ENCODE measurements at regions of chr13 and their contacts with region 1.

Region 1: GRCh38 chr13:30465585-30466357 is at the start of gene HMGB1:
- DNase-seq: peak; percentile 97
- ATAC-seq: peak; percentile 93
- H3K4me3 ChIP-seq: peak within 1 kb of the TSS; percentile 82
- H3K27ac ChIP-seq: peak within 1 kb of the TSS; percentile 97
- H3K4me1 ChIP-seq: 0 out of 2 replicates have a peak, but pooled peaks cover 10% of the 10 kb centered on the region
- H3K27me3 ChIP-seq: no peaks in the 10 kb centered on the region
- CTCF ChIP-seq: no peak
- EP300 ChIP-seq: no peak
- POLR2A ChIP-seq: peak; percentile 96
- RAD21 ChIP-seq: no peak
- polyA plus RNA-seq, gene HMGB1: 2,416 to 2,529 TPM

Region 2: DNA sequence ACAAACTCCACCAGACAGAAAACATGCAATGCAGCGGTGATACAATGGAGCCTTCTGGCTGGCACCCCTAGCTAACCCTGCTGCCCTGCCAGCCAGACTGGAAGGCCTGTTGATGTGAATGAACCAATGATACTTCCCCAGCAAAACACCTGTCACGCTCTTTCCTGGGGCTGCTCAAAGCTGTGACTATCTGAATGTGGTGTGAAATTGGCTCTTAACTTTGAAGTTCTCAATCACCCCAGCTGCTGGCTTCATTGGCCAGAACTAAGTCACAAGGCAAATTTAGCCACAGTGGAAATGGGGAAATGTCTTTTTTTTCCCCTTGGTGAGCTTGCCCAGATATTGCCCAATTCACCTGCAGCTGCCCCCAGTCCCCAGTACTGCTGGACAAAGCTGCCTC is 1017.6 kb before region 1 on chr13:
- CTCF ChIA-PET with region 1: no interaction called
- POLR2A ChIA-PET with region 1: no interaction called
- RAD21 ChIA-PET with region 1: no interaction called
- SMC1A ChIA-PET with region 1: no interaction called
- in situ Hi-C with region 1: no loop called
- intact Hi-C with region 1: no loop called
- DNase-seq: no peak
- ATAC-seq: no peak
- H3K4me3 ChIP-seq: no peak overlapping the region
- H3K27ac ChIP-seq: no peak overlapping the region
- H3K4me1 ChIP-seq: no peaks in the 10 kb centered on the region
- H3K27me3 ChIP-seq: no peaks in the 10 kb centered on the region; a peak in 1 of 4 replicates
- CTCF ChIP-seq: no peak
- EP300 ChIP-seq: no peak
- POLR2A ChIP-seq: no peak
- RAD21 ChIP-seq: no peak

Region 3: DNA sequence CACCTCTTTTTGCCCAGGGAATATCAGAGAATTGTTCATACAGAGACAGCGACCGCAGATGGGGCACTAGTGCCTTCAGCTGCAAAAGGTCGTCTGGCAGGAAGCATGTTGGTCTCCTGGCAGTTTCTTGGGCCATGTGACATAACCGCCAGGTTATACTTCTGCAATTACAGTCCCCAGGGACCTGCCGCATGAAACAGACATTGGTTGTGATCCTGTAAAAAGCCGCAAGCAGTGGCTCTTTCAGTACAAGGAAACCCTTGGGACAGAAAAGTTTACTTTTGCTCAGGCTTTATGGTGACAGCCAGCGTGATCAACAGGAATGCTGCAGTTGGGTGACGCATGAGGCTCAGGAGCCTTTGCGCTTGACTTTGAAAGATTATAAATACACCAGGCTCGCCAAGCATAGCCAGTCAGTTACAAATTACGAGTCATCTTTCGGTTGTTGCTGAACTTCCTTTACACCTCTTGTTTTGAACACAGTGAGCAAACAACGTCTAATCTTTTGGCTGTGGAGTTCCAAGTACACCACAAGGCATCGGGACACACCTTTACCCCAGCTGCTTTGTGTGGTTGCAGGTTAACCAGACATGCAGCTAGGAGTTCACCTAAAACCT is 94.0 kb before region 1 on chr13:
- CTCF ChIA-PET with region 1: interaction called, 9 read pairs
- POLR2A ChIA-PET with region 1: interaction called, 12 read pairs
- RAD21 ChIA-PET with region 1: interaction called, 19 read pairs
- SMC1A ChIA-PET with region 1: interaction called, 13 read pairs
- in situ Hi-C with region 1: no loop called
- intact Hi-C with region 1: loop called (anchors 5 kb)
- DNase-seq: peak; percentile 96
- ATAC-seq: peak; percentile 74
- H3K4me3 ChIP-seq: peak overlapping the region; percentile 12; the same call in 1 of the 2 replicates
- H3K27ac ChIP-seq: peak overlapping the region; percentile 73
- H3K4me1 ChIP-seq: peaks cover 62% of the 10 kb centered on the region
- H3K27me3 ChIP-seq: no peaks in the 10 kb centered on the region
- CTCF ChIP-seq: peak in 1 of 3 experiments; percentile 6; a peak in 1 of 6 replicates
- EP300 ChIP-seq: peak; percentile 96 to 97
- POLR2A ChIP-seq: no peak
- RAD21 ChIP-seq: 0 out of 2 replicates have a peak, but pooled peaks have one; percentile 1

Region 4: DNA sequence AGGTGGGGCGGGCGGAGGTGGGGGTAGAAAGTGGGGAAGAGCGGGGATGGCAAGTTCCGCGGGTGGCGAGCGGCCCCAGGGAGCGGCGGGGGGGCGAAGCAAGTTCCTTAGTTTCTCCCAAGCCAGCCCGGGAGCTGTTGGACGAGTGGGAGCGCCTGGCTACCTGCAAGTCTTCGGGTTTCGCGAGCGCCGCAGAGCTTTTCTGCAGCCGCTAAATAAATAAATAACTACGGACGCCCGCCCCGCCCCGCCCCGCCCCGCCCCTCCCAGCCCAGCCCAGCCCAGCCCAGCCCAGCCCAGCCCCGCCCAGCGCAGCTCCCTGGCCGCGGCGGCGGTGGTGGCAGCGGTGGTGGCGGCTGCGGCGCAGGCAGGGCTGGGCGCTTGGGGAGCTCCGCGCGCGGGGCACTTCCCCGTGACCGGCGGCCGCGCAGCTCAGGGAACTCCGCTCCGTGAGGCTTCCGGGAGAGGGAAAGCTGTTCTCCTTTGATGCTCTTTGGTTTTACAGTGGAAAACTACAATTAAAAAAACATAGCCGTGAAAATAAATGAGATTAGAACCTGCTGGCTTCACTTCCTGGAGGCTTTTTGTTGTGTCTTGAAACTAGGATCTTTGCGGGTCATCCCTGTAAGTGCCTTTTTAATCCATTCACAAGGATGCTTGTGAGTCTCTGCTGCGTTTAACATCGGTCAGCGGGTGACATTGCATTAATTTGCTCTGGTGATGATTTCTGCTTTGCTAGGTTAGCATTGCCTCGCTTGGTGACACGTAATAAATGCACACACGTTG is 43.5 kb before region 1 on chr13 and contains the start of gene UBE2L5:
- CTCF ChIA-PET with region 1: interaction called, 8 read pairs
- POLR2A ChIA-PET with region 1: interaction called, 3 read pairs
- RAD21 ChIA-PET with region 1: interaction called, 8 read pairs
- SMC1A ChIA-PET with region 1: interaction called, 4 read pairs
- in situ Hi-C with region 1: no loop called
- intact Hi-C with region 1: loop called (anchors 2 kb)
- DNase-seq: no peak
- ATAC-seq: peak; percentile 95
- H3K4me3 ChIP-seq: peak within 1 kb of the TSS; percentile 82
- H3K27ac ChIP-seq: peak within 1 kb of the TSS; percentile 50
- H3K4me1 ChIP-seq: peaks cover 2% of the 10 kb centered on the region; the same call in 1 of the 2 replicates
- H3K27me3 ChIP-seq: no peaks in the 10 kb centered on the region
- CTCF ChIP-seq: no peak
- EP300 ChIP-seq: no peak
- POLR2A ChIP-seq: peak; percentile 75
- RAD21 ChIP-seq: no peak
- polyA plus RNA-seq, gene UBE2L5: 0.03 to 0.11 TPM

Region 5: GRCh38 chr13:30443957-30444404 is 21.8 kb before region 1 on chr13:
- CTCF ChIA-PET with region 1: interaction called, 11 read pairs
- POLR2A ChIA-PET with region 1: interaction called, 12 read pairs
- RAD21 ChIA-PET with region 1: interaction called, 12 read pairs
- SMC1A ChIA-PET with region 1: interaction called, 10 read pairs
- in situ Hi-C with region 1: no loop called
- intact Hi-C with region 1: loop called (anchors 2 kb)
- DNase-seq: no peak
- ATAC-seq: peak; percentile 62
- H3K4me3 ChIP-seq: peak overlapping the region; percentile 26; the same call in 1 of the 2 replicates
- H3K27ac ChIP-seq: peak overlapping the region; percentile 56
- H3K4me1 ChIP-seq: peaks cover 43% of the 10 kb centered on the region
- H3K27me3 ChIP-seq: no peaks in the 10 kb centered on the region
- CTCF ChIP-seq: no peak
- EP300 ChIP-seq: 0 out of 4 replicates have a peak, but pooled peaks of 1 of the 2 experiments have one; percentile 5
- POLR2A ChIP-seq: no peak
- RAD21 ChIP-seq: 0 out of 2 replicates have a peak, but pooled peaks have one; percentile 4

Region 6: GRCh38 chr13:30572859-30573275 is 107.1 kb after region 1 on chr13:
- CTCF ChIA-PET with region 1: interaction called, 4 read pairs
- POLR2A ChIA-PET with region 1: no interaction called
- RAD21 ChIA-PET with region 1: no interaction called
- SMC1A ChIA-PET with region 1: no interaction called
- in situ Hi-C with region 1: no loop called
- intact Hi-C with region 1: loop called (anchors 1 kb)
- DNase-seq: peak; percentile 28
- ATAC-seq: peak; percentile 81
- H3K4me3 ChIP-seq: no peak overlapping the region; the same call in 1 of the 2 replicates
- H3K27ac ChIP-seq: no peak overlapping the region
- H3K4me1 ChIP-seq: peaks cover 17% of the 10 kb centered on the region; the same call in 1 of the 2 replicates
- H3K27me3 ChIP-seq: peaks cover 0 to under 1% of the 10 kb centered on the region in 2 experiments; a peak in 1 of 4 replicates
- CTCF ChIP-seq: peak; percentile 5 to 35 (median 31); a peak in 3 of 6 replicates
- EP300 ChIP-seq: no peak
- POLR2A ChIP-seq: no peak
- RAD21 ChIP-seq: peak; percentile 68

Region 7: DNA sequence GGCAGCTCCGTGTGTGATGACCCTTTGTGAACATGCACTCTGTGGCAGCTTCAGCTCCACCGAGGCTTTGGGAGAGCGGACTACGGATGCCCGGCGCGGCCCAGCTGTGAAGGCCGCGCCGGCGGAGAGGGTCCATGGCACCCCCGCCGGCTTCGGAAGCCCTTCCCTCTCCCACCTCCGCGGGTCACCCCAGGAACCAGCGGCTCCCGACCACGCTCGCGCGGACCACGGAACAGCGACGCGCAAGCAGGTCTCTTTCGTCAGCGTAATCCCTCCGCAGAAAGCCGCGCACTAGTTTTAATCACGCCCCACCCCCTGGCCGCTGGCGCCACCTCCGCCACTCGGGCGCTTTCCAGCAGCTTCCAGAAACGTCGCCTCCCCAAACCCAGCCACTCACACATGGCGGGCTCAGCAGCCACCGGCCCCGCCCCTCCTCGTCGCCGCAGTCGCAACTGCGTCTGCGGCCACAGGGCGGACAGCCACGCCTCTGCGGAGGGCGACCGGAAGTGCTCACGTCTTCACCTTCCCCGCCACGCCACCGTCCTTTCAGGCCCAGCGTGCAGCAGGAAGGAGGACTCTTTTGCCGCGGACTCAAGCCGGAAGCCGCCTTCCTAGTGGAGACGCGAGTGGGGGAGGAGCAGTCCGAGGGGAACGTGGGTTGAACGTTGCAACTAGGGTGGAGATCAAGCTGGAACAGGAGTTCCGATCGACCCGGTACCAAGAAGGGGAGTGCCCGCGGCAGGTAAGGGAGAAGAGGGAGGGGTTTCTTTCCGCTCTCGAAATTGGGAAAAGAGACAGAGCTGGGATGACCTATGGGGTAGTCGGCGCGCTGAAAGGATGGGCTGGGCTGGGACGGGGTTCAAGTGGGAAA is 151.8 kb after region 1 on chr13 and contains the start of gene USPL1:
- CTCF ChIA-PET with region 1: no interaction called
- POLR2A ChIA-PET with region 1: interaction called, 4 read pairs
- RAD21 ChIA-PET with region 1: interaction called, 6 read pairs
- SMC1A ChIA-PET with region 1: interaction called, 4 read pairs
- in situ Hi-C with region 1: no loop called
- intact Hi-C with region 1: loop called (anchors 2 kb)
- DNase-seq: peak; percentile 96
- ATAC-seq: peak; percentile 91
- H3K4me3 ChIP-seq: peak within 1 kb of the TSS; percentile 91
- H3K27ac ChIP-seq: peak within 1 kb of the TSS; percentile 93
- H3K4me1 ChIP-seq: peaks cover 8% of the 10 kb centered on the region
- H3K27me3 ChIP-seq: no peaks in the 10 kb centered on the region
- CTCF ChIP-seq: peak in 1 of 3 experiments; percentile 6; a peak in 1 of 6 replicates
- EP300 ChIP-seq: peak; percentile 84 to 95
- POLR2A ChIP-seq: peak; percentile 93
- RAD21 ChIP-seq: peak; percentile 17; the same call in 1 of the 2 replicates
- polyA plus RNA-seq, gene USPL1: 7.9 to 8.0 TPM

Region 8: GRCh38 chr13:30802953-30803478 is 337.2 kb after region 1 on chr13:
- CTCF ChIA-PET with region 1: no interaction called
- POLR2A ChIA-PET with region 1: no interaction called
- RAD21 ChIA-PET with region 1: interaction called, 4 read pairs
- SMC1A ChIA-PET with region 1: interaction called, 4 read pairs
- in situ Hi-C with region 1: no loop called
- intact Hi-C with region 1: loop called (anchors 5 kb)
- DNase-seq: peak; percentile 32
- ATAC-seq: peak; percentile 100
- H3K4me3 ChIP-seq: no peak overlapping the region
- H3K27ac ChIP-seq: no peak overlapping the region
- H3K4me1 ChIP-seq: no peaks in the 10 kb centered on the region
- H3K27me3 ChIP-seq: no peaks in the 10 kb centered on the region; a peak in 1 of 4 replicates
- CTCF ChIP-seq: peak; percentile 88 to 95 (median 92)
- EP300 ChIP-seq: no peak
- POLR2A ChIP-seq: no peak
- RAD21 ChIP-seq: peak; percentile 95